Activated CD4-positive, alpha-beta T cell treated with anti-CD3 and anti-CD28 coated beads, Interleukin-2, amount 10 ng/mL, durations not matched to agents 24 days and 14 days (primary cell): ENCODE measurements at regions of chr1 and their contacts with region 1.

Region 1: GRCh38 chr1:58783993-58784757 is at the start of gene JUN:
- DNase-seq: peak; percentile 99
- H3K4me3 Mint-ChIP-seq: peak within 1 kb of the TSS; percentile 97
- H3K27ac Mint-ChIP-seq: peak within 1 kb of the TSS; percentile 99
- H3K4me1 Mint-ChIP-seq: peaks cover 36% of the 10 kb centered on the region
- H3K27me3 Mint-ChIP-seq: peaks cover 7% of the 10 kb centered on the region
- total RNA-seq, gene JUN: 51.6 and 52.6 TPM in 2 replicates

Region 2: DNA sequence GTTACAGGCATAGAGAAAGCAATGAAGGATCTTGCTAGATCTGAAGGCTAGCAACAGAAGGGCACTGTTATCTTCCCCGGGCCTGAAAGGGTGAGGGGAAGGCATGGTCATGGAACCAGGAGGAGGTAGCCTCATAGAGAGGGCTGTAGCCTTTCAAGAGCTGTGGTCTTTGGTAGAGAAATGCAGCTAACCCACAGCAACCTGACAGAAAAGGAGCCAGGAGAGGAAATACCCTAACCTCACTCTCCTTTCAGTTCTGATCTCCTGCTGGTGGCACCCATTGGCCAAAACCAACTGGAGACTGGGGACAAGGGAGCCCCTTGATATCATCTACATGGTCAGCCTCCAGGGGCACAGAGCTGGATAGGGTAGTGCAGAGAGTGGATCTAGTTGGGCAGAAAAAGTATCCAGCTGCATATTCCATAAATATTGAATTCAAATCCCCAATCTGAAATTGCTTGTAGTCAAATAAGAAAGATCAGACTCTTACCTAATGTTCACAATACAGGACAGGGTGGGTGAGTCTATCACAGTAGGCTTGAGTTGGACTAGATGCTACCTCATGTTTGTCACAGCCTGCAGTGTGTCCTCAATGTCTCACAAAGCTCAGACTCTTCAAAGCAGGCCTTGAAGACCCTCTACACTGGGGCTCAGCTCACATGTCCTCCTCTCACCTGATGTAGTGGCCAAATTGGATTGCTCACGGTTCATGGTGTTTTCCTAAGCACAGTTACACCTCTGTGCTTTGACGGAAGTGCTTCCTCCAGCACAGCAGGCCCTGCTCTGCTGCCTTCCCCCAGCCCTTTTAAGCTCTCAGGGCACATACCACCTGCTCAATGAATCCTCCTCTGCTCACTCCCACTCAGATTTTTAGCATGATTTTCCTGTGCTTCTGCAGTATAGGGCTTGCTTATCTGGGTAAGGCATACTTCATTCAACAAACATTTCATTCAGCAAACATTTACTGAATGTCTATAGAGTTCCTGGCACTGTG is 73.8 kb after region 1 on chr1:
- intact Hi-C with region 1: loop called (anchors 2 kb)
- DNase-seq: peak; percentile 81
- H3K4me3 Mint-ChIP-seq: peak overlapping the region; percentile 64
- H3K27ac Mint-ChIP-seq: peak overlapping the region; percentile 92
- H3K4me1 Mint-ChIP-seq: peaks cover 49% of the 10 kb centered on the region
- H3K27me3 Mint-ChIP-seq: peaks cover 2% of the 10 kb centered on the region

Region 3: DNA sequence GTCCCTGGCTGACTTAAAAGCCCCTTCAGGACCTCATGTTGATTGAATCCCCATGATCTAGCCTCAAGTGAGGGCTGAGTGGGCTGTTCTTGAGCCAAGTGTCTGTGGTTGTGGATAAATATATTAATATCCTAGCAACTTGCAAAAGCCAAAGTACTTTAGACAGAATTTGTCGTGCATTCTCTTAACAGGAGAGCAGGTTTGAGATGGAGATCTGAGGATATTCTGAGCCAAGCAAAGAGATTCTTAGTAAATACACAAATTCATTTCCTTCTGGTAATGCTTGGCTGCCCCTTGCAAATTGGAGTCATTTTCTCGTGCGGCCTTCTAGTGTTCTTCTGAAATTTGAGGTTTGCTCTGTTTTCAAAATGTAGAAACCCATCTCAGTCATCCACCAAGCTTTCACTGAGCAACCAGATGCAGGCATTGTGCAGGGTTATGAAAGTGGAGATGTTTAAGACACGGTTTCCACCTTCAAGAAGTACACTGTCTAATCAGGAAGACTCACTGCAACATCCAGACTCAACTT is 241.8 kb after region 1 on chr1:
- intact Hi-C with region 1: loop called (anchors 1 kb)
- DNase-seq: no peak
- H3K4me3 Mint-ChIP-seq: peak overlapping the region; percentile 75
- H3K27ac Mint-ChIP-seq: no peak overlapping the region
- H3K4me1 Mint-ChIP-seq: peaks cover 35% of the 10 kb centered on the region
- H3K27me3 Mint-ChIP-seq: no peaks in the 10 kb centered on the region

Region 4: DNA sequence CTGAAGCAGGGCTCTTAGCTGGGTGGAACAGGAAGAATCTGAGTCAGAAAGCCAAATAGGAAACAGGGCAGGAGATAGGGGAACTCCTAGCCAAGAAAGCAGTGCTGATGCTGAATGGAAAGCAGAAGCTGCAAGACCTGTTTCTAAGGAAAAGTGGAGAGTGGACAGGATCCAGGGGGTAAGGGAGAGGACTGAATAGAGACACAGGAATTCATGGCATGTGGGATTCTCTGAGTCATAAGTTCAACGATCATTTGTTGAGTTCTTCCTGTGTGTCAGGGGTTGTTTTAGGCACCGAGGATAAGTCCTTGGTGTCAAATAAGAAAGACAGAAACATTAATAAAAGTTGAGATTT is 358.9 kb after region 1 on chr1:
- intact Hi-C with region 1: loop called (anchors 2 kb)
- DNase-seq: no peak
- H3K4me3 Mint-ChIP-seq: peak overlapping the region; percentile 62
- H3K27ac Mint-ChIP-seq: peak overlapping the region; percentile 87
- H3K4me1 Mint-ChIP-seq: peaks cover 61% of the 10 kb centered on the region
- H3K27me3 Mint-ChIP-seq: no peaks in the 10 kb centered on the region

Region 5: GRCh38 chr1:59432531-59433439 is 648.6 kb after region 1 on chr1:
- intact Hi-C with region 1: loop called (anchors 2 kb)
- DNase-seq: peak; percentile 53
- H3K4me3 Mint-ChIP-seq: no peak overlapping the region
- H3K27ac Mint-ChIP-seq: peak overlapping the region; percentile 38
- H3K4me1 Mint-ChIP-seq: peaks cover 34% of the 10 kb centered on the region
- H3K27me3 Mint-ChIP-seq: no peaks in the 10 kb centered on the region

Region 6: DNA sequence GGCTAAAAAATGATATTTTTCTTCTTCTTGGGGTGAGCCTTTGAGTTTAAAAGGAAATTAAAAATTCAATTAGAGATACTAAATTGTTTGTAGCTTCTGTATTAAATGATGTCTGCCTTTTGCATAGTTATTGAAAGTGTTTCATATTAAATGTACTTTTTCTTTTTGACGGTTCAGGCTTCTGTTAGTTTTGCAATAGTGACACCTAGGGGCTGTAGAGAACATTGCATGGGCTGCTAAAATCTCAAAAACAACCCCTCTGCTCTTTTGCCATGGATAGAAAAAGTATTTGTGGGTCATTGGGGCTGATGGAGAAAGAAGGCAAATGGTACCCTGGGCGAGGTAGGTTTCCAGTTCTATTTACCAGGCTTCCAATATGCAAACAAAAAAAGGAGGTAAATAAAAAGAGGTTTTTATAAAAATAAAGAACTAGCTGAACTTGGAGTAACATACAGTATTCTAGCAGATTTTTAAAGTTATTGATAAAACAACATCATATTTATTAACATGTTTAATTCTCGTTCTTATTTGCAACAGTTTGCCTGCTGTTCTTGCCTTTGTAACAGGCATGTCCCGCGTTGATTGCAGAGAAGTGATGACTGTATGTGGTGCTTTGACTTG is 915.2 kb after region 1 on chr1:
- intact Hi-C with region 1: loop called (anchors 2 kb)
- DNase-seq: peak; percentile 80
- H3K4me3 Mint-ChIP-seq: no peak overlapping the region
- H3K27ac Mint-ChIP-seq: no peak overlapping the region
- H3K4me1 Mint-ChIP-seq: peaks cover 26% of the 10 kb centered on the region
- H3K27me3 Mint-ChIP-seq: peaks cover 2% of the 10 kb centered on the region